ENCODE measurements at regions of chrX and their contacts with region 1.

Region 1: DNA sequence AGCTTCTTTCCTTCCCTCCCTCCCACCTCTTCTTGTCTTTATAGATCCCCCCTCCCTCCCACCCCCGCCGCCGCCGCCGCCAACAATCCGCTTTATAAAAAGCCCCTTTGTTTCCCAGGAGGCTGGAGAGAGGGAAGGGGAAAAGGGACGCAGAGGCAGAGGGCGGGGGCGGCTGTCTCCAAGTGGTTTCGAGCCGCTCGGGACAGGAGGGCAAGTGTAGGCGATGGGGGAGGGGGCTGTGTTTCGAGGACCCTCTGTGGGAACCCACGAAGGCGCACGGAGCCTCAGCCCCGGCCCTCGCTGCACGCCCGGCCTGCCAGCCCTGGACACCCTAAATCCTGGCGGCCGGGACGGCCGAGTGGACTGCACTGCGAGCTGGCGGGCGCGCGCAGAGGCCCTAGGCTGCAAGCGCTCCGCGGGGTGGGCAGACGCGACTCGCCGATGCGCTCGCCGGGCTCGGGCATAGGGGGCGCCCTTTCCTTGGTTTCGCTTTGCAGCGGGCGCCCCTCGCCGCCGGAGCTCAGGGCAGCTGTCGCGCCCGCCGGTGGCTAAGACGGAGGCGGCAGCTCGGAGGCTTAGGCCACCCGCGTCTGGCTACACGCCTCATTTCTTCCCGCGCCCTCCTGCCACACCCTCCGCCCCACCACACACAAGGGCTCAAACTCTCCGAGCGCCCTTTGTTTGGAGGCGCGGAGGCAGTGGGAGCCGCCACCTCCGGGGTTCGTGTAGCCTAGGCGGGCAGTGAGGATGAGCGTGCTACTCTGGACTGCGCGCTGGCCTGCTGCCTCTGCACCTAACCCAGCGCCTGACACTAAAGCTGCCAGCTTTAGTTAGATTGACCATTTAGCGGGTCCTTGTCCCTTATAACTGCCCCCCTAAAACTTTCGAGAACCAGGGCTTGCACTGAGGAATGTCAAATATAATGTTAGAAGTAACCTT is 2.2 kb downstream of the MAMLD1 start:
- DNase-seq: peak; percentile 86 to 92
- ATAC-seq: peak; percentile 79
- H3K4me3 ChIP-seq: peak overlapping the region; percentile 26 to 31
- H3K27ac ChIP-seq: peak overlapping the region; percentile 10 to 88
- H3K4me1 ChIP-seq: no peaks in the 10 kb centered on the region
- H3K27me3 ChIP-seq: no peaks in the 10 kb centered on the region

Region 2: GRCh38 chrX:149950681-149951080 is 414.6 kb before region 1 on chrX:
- intact Hi-C with region 1: loop called (anchors 5 to 10 kb)
- DNase-seq: no peak
- ATAC-seq: no peak
- H3K4me3 ChIP-seq: no peak overlapping the region
- H3K27ac ChIP-seq: no peak overlapping the region
- H3K4me1 ChIP-seq: no peaks in the 10 kb centered on the region
- H3K27me3 ChIP-seq: no peaks in the 10 kb centered on the region

Region 3: DNA sequence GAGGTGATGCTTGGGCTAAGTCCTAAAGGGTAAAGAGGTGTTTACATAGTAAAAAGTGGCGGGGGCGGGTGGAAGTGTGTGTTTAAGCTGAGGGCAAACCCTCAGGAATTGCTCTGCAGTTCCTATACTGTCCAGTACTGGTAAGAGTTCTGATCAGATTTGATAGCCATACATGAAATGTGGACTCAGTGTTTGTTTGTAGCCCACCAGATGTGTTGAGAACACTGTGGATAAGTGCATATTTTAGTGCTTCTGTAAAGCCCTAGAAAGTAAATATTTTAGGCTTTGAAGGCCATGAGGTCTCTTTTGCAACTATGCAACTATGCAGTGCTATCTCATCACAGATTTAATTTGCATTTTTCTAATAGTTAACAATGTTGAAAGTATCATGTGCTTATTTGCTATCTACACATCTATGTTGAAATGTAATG is 346.4 kb before region 1 on chrX:
- intact Hi-C with region 1: no loop called
- DNase-seq: no peak
- ATAC-seq: no peak
- H3K4me3 ChIP-seq: no peak overlapping the region
- H3K27ac ChIP-seq: no peak overlapping the region
- H3K4me1 ChIP-seq: no peaks in the 10 kb centered on the region
- H3K27me3 ChIP-seq: no peaks in the 10 kb centered on the region

Region 4: DNA sequence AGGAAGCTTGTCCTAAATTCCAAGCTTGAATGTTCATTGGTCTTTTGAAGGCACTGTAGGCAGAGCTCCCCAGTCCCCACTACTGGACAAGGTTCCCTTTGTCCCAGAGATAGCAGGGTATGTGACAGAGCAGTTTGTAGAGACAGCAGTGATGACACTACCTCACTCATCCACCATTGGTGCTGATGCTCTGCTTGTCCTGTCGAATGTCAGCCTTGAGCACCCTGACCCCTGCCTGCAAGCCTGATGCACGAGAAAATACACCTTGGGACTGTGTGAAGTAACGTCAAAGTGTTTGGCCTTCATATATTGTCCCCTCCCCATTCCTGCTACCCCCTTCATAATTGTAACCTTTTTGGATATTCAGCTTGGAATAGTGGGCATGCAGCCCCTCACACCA is 238.1 kb before region 1 on chrX:
- intact Hi-C with region 1: no loop called
- DNase-seq: no peak
- ATAC-seq: no peak
- H3K4me3 ChIP-seq: no peak overlapping the region
- H3K27ac ChIP-seq: no peak overlapping the region
- H3K4me1 ChIP-seq: no peaks in the 10 kb centered on the region
- H3K27me3 ChIP-seq: no peaks in the 10 kb centered on the region

Region 5: DNA sequence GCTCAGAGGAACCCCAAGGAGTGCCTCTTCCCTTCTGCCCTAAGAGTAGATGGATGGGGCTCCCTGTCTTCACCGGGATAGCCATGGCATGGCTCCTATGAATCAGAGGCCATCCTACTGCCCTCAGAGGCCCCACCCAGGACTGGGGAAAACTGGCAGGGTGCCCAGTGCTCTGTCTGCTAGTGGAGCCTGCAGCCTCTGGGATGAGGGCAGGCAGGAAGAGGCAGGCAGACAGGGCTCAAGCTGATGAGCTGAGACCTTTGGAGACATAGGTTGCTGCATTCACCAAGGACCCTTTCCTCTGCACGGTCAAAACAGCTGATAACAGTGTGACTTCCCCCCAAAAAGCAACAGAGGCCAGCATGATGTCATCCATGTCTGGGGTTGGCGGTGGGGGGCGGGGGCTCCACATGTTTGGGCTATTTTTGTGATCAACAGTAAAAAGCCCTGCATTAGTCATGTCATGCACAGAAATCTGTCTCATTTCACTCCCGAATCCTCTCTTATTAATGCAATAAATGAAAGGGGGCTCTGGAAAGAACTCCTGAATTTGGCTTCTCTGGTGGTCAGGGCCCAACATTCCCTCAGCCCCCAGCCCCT is 209.8 kb before region 1 on chrX:
- intact Hi-C with region 1: loop called in 1 of 2 experiments (anchors 10 kb)
- DNase-seq: peak; percentile 67 to 81
- ATAC-seq: peak; percentile 23
- H3K4me3 ChIP-seq: no peak overlapping the region
- H3K27ac ChIP-seq: no peak overlapping the region
- H3K4me1 ChIP-seq: peaks cover 0 to 2% of the 10 kb centered on the region in 2 donors
- H3K27me3 ChIP-seq: no peaks in the 10 kb centered on the region

Region 6: DNA sequence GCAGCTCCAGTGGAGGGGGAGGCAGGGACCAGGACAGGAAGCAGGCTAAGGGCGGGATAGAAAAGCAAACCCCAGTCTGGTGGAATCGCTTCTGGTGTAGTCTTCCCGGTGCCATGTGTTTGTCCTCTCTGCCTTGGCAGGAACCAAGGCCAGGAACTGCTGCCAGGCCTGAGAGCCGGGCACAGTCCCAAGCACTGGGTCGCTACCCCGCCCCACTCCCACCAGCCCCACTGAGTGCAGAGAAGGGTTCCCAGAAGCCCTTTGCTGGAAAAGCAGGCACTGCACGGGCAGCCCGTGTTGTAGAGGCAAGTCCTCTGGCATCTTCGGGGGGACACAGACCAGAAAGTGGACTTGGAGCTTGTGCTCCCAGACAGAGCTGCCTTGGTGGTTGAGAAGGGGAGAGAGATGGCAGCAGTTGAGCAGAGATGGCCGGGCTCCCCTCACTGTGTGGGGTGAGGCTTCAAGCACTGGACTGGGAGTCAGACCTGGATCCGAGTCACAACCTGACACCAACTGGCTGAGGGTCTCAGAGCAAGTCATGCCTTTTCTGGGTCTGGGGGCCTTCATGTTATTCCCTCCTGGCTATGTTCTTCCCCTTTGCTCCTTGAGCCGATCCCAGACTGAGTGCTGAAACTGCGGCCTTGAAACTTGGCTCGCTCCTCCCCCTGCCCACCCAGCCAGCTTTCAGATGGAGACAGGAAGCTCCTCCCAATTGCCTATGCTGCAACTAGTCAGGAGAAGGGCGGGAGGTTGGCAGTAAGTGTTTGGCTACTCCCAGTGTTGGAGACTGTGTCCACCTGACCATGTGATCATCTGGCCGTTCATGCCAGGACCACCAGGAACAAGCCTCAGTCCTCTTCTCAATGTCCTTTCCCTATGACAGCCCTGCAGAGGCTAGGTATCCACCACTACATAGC is 143.4 kb after region 1 on chrX:
- intact Hi-C with region 1: loop called in 1 of 2 experiments (anchors 5 kb)
- DNase-seq: peak; percentile 82
- ATAC-seq: peak; percentile 80
- H3K4me3 ChIP-seq: no peak overlapping the region
- H3K27ac ChIP-seq: peak overlapping the region in 1 of 2 donors; percentile 75
- H3K4me1 ChIP-seq: no peaks in the 10 kb centered on the region
- H3K27me3 ChIP-seq: no peaks in the 10 kb centered on the region

Region 7: GRCh38 chrX:150525061-150525919 is 160.0 kb after region 1 on chrX:
- intact Hi-C with region 1: no loop called
- DNase-seq: peak; percentile 75 to 84
- ATAC-seq: peak; percentile 67
- H3K4me3 ChIP-seq: no peak overlapping the region
- H3K27ac ChIP-seq: no peak overlapping the region
- H3K4me1 ChIP-seq: peaks cover 0 to 3% of the 10 kb centered on the region in 2 donors
- H3K27me3 ChIP-seq: no peaks in the 10 kb centered on the region

Region 8: GRCh38 chrX:150536455-150537116 is 171.3 kb after region 1 on chrX:
- intact Hi-C with region 1: no loop called
- DNase-seq: no peak
- ATAC-seq: peak; percentile 33
- H3K4me3 ChIP-seq: no peak overlapping the region
- H3K27ac ChIP-seq: no peak overlapping the region
- H3K4me1 ChIP-seq: no peaks in the 10 kb centered on the region
- H3K27me3 ChIP-seq: no peaks in the 10 kb centered on the region

Region 9: GRCh38 chrX:150715184-150715583 is 349.9 kb after region 1 on chrX:
- intact Hi-C with region 1: loop called in 1 of 2 experiments (anchors 5 kb)
- DNase-seq: no peak
- ATAC-seq: peak; percentile 24
- H3K4me3 ChIP-seq: no peak overlapping the region
- H3K27ac ChIP-seq: no peak overlapping the region
- H3K4me1 ChIP-seq: no peaks in the 10 kb centered on the region
- H3K27me3 ChIP-seq: no peaks in the 10 kb centered on the region